ENCODE measurements at regions of chr3 and their contacts with region 1.

Region 1: GRCh38 chr3:9439331-9439730 is 41.9 kb downstream of the SETD5 start:
- DNase-seq: no peak

Region 2: DNA sequence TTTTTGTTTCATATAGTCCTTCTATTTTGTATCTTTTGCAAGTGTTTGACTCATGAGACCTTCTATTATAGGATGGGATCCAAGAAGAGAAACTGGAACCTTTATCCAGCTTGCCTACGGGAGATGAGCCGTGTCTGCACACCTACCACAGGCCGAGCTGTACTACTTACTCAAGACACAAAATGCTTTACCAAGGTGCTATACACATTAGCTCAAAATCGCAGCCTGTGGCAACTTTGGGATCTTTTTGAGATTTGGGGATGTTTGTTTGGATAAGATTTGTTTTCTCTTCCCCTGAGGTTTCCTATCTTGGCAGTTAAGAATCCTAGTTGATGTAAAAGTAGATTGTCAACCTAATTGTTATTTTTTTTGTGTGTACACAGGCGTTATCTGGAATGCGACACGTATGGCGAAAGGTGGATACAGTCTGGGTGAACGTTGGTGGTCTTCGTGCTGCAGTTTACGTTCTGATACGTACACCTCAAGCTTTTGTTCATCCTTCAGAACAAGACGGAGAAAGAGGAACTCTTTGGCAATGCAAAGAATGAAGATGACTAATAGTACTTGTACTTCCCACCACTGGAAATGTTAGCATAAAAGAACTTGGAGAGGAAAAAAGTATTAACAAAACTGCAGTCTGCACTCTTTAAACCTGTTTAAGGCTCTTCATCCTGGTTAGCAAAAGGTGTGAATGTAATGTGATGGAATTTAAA is 55.0 kb before region 1 on chr3:
- intact Hi-C with region 1: loop called in 1 of 2 experiments (anchors 10 kb)
- DNase-seq: no peak

Region 3: DNA sequence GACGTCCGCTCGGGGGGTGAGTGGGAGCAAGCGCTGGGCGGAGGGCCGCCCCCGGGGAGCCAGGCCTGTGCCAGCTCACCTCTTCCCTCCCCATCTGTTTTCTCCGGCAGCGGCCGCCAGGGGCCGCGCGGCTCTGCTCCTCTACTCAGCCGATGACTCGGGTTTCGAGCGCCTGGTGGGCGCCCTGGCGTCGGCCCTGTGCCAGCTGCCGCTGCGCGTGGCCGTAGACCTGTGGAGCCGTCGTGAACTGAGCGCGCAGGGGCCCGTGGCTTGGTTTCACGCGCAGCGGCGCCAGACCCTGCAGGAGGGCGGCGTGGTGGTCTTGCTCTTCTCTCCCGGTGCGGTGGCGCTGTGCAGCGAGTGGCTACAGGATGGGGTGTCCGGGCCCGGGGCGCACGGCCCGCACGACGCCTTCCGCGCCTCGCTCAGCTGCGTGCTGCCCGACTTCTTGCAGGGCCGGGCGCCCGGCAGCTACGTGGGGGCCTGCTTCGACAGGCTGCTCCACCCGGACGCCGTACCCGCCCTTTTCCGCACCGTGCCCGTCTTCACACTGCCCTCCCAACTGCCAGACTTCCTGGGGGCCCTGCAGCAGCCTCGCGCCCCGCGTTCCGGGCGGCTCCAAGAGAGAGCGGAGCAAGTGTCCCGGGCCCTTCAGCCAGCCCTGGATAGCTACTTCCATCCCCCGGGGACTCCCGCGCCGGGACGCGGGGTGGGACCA is 493.7 kb after region 1 on chr3:
- intact Hi-C with region 1: no loop called
- DNase-seq: peak; percentile 95